Activated B cell treated with CpG ODN at 0.5 μM for 24 hours (primary cell): ENCODE measurements at regions of chr15 and their contacts with region 1.

Region 1: GRCh38 chr15:90114451-90114901 is 12.2 kb upstream of the IDH2 start:
- DNase-seq: no peak
- ATAC-seq: no peak
- H3K4me3 Mint-ChIP-seq: no peak overlapping the region
- H3K27ac Mint-ChIP-seq: no peak overlapping the region
- H3K4me1 Mint-ChIP-seq: no peaks in the 10 kb centered on the region
- H3K27me3 Mint-ChIP-seq: no peaks in the 10 kb centered on the region
- CTCF ChIP-seq: no peak

Region 2: DNA sequence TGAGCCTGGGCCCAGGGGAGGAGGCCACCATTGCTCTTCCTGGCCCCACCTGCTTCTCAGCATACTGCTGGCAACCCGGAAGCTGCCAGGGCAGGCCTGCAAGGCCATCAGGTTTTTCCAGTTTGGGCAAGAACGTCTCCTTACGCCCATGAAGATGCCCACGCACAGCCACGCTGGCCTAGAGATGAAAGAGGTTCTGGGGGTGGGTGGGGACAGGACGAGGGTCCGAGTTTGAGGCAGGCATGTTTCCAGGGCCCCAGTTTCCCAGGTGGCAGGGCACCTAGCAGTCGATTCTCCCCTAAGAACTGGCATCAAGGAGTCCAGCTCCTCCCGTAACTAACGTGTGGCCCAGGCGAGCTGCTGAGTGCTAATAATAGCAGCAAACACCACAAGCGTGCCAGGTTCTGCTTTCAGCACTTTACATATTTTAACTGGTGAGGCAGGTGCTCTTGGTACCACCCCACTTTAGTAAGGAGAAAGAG is 67.5 kb before region 1 on chr15:
- CTCF ChIA-PET with region 1: no interaction called
- POLR2A ChIA-PET with region 1: no interaction called
- intact Hi-C with region 1: no loop called
- DNase-seq: peak; percentile 38
- ATAC-seq: peak; percentile 87
- H3K4me3 Mint-ChIP-seq: peak overlapping the region; percentile 55
- H3K27ac Mint-ChIP-seq: peak overlapping the region; percentile 92
- H3K4me1 Mint-ChIP-seq: peaks cover 62% of the 10 kb centered on the region
- H3K27me3 Mint-ChIP-seq: no peaks in the 10 kb centered on the region
- CTCF ChIP-seq: no peak

Region 3: DNA sequence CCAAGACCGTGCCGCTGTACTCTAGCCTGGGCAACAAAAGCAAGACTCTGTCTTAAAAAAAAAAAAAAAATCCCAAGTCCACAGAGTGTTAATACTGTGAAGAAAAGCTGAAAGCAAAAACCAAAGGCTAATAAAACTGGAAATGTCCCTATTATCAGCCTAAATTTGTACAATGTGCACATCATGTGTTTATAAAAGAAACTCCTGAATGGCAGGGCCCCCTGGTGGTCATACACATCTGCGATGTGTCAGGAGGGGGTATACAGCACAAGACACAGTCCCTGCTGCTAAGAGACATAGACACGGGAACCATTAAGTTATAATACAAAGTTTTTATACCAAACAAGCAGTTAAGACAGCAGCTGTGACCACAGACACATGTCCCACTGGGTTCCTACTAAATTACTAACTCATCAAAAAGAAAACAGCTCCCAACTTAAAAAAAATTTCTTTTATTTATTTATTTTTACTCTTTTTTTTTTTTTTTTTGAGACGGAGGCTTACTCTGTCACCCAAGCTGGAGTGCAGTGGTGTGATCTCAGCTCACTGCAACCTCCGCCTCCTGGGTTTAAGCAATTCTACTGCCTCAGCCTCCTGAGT is 43.2 kb before region 1 on chr15:
- CTCF ChIA-PET with region 1: no interaction called
- POLR2A ChIA-PET with region 1: no interaction called
- intact Hi-C with region 1: no loop called
- DNase-seq: peak; percentile 53
- ATAC-seq: peak; percentile 97
- H3K4me3 Mint-ChIP-seq: no peak overlapping the region
- H3K27ac Mint-ChIP-seq: no peak overlapping the region
- H3K4me1 Mint-ChIP-seq: peaks cover 8% of the 10 kb centered on the region
- H3K27me3 Mint-ChIP-seq: no peaks in the 10 kb centered on the region
- CTCF ChIP-seq: peak; percentile 46

Region 4: DNA sequence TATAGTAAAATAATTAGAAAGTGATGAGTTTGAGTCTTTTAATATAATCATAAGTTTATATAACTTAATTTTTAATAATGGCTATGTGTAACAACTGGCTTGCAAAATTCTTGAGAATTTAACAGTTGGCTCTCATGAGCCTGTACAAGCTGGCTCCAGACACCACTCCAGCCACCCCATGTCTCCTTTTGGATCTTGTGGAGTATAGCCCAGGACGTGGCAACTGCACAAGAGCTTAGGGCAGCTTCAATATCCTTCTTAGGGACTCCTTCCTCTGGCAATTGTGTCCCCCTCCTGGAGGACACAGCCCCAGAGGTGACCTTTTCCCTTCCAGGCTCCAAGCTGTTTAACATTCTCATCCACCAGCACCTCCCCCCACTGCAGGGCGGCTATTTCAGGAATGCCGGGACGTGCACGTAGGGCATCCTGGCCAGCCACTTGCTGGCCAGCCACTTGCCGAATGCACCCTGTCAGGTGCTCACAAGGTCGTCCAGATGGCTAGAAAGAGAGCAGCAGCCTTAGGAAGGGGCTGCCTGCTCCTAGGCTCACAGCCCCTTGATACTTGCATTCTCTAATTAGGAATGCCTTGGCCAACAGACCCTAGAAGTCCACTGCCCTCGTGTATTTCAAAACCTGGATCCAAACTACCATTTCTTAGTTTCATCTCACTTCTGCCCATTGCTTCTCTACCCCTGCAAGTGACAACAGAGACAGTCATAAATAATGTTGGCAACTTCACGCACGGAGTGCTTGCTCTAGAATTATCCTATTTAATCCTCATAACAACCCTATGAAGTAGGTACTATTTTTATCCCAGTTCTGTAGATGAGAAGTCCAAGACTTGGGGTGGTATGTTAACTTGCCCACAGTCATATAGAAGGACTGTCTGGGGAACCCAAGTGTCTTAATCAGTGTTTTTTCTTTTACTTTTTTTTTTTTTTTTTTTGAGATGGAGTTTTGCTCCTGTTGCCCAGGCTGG is 12.3 kb after region 1 on chr15:
- CTCF ChIA-PET with region 1: no interaction called
- POLR2A ChIA-PET with region 1: interaction called, 11 read pairs
- intact Hi-C with region 1: no loop called
- DNase-seq: no peak
- ATAC-seq: no peak
- H3K4me3 Mint-ChIP-seq: no peak overlapping the region
- H3K27ac Mint-ChIP-seq: no peak overlapping the region
- H3K4me1 Mint-ChIP-seq: peaks cover 8% of the 10 kb centered on the region
- H3K27me3 Mint-ChIP-seq: peaks cover 8% of the 10 kb centered on the region
- CTCF ChIP-seq: no peak

Region 5: GRCh38 chr15:90750186-90750585 is 635.7 kb after region 1 on chr15:
- CTCF ChIA-PET with region 1: no interaction called
- POLR2A ChIA-PET with region 1: no interaction called
- intact Hi-C with region 1: no loop called
- DNase-seq: no peak
- ATAC-seq: peak; percentile 67
- H3K4me3 Mint-ChIP-seq: peak overlapping the region; percentile 67
- H3K27ac Mint-ChIP-seq: peak overlapping the region; percentile 84
- H3K4me1 Mint-ChIP-seq: peaks cover 21% of the 10 kb centered on the region
- H3K27me3 Mint-ChIP-seq: no peaks in the 10 kb centered on the region
- CTCF ChIP-seq: no peak

Region 6: DNA sequence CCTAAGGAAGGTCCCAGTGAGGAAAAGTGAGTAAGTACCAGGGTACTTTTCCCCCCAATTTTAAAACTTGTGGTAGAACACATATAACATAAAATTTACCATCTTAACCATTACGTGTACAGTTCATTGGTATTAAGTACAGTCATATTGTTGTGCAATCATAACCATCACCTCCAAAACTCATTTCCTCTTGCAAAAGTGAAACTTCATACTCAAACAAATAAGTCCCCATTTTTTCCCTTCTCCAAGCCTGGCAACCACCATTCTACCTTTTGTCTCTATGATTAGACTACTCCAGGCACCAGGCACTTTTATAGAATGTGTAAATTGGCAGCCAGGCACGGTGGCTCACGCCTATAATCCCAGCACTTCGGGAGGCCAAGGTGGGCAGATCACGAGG is 867.7 kb after region 1 on chr15:
- CTCF ChIA-PET with region 1: no interaction called
- POLR2A ChIA-PET with region 1: no interaction called
- intact Hi-C with region 1: no loop called
- DNase-seq: no peak
- ATAC-seq: peak; percentile 43
- H3K4me3 Mint-ChIP-seq: peak overlapping the region; percentile 21
- H3K27ac Mint-ChIP-seq: peak overlapping the region; percentile 77
- H3K4me1 Mint-ChIP-seq: peaks cover 32% of the 10 kb centered on the region
- H3K27me3 Mint-ChIP-seq: no peaks in the 10 kb centered on the region
- CTCF ChIP-seq: no peak